CD4-positive, alpha-beta T cell (primary cell): ENCODE measurements at regions of chr4 and their contacts with region 1.

Region 1: GRCh38 chr4:70734168-70734954 is 12.6 kb downstream of the RUFY3 start:
- DNase-seq: peak in 8 of 14 experiments; percentile 4 to 86 (median 34)
- ATAC-seq: peak; percentile 86
- H3K4me3 ChIP-seq: peak overlapping the region; percentile 44
- H3K4me3 Mint-ChIP-seq: peak overlapping the region; percentile 72
- H3K27ac ChIP-seq: peak overlapping the region; percentile 37 to 79
- H3K27ac Mint-ChIP-seq: peak overlapping the region; percentile 80
- H3K4me1 ChIP-seq: peaks cover 35% of the 10 kb centered on the region
- H3K4me1 Mint-ChIP-seq: peaks cover 57% of the 10 kb centered on the region
- H3K27me3 ChIP-seq: no peaks in the 10 kb centered on the region
- H3K27me3 Mint-ChIP-seq: no peaks in the 10 kb centered on the region
- CTCF ChIP-seq: no peak

Region 2: GRCh38 chr4:69934150-69934549 is 800.2 kb before region 1 on chr4:
- CTCF ChIA-PET with region 1: no interaction called
- POLR2A ChIA-PET with region 1: no interaction called
- intact Hi-C with region 1: no loop called
- DNase-seq: no peak
- ATAC-seq: no peak
- H3K4me3 ChIP-seq: no peak overlapping the region
- H3K4me3 Mint-ChIP-seq: no peak overlapping the region
- H3K27ac ChIP-seq: no peak overlapping the region
- H3K27ac Mint-ChIP-seq: no peak overlapping the region
- H3K4me1 ChIP-seq: no peaks in the 10 kb centered on the region
- H3K4me1 Mint-ChIP-seq: no peaks in the 10 kb centered on the region
- H3K27me3 ChIP-seq: no peaks in the 10 kb centered on the region
- H3K27me3 Mint-ChIP-seq: no peaks in the 10 kb centered on the region
- CTCF ChIP-seq: no peak

Region 3: GRCh38 chr4:70687821-70688794 is 46.3 kb before region 1 on chr4 and contains the start of gene UTP3:
- CTCF ChIA-PET with region 1: interaction called, 3 read pairs
- POLR2A ChIA-PET with region 1: interaction called, 49 read pairs
- intact Hi-C with region 1: loop called (anchors 2 to 5 kb)
- DNase-seq: peak; percentile 87 to 98 (median 90)
- ATAC-seq: peak; percentile 87
- H3K4me3 ChIP-seq: peak within 1 kb of the TSS; percentile 74
- H3K4me3 Mint-ChIP-seq: peak within 1 kb of the TSS; percentile 91
- H3K27ac ChIP-seq: peak within 1 kb of the TSS; percentile 94 to 97
- H3K27ac Mint-ChIP-seq: peak within 1 kb of the TSS; percentile 99
- H3K4me1 ChIP-seq: peaks cover 26% of the 10 kb centered on the region
- H3K4me1 Mint-ChIP-seq: peaks cover 45% of the 10 kb centered on the region
- H3K27me3 ChIP-seq: no peaks in the 10 kb centered on the region
- H3K27me3 Mint-ChIP-seq: no peaks in the 10 kb centered on the region
- CTCF ChIP-seq: peak; percentile 98
- total RNA-seq, gene UTP3: 19.2 to 20.5 TPM

Region 4: DNA sequence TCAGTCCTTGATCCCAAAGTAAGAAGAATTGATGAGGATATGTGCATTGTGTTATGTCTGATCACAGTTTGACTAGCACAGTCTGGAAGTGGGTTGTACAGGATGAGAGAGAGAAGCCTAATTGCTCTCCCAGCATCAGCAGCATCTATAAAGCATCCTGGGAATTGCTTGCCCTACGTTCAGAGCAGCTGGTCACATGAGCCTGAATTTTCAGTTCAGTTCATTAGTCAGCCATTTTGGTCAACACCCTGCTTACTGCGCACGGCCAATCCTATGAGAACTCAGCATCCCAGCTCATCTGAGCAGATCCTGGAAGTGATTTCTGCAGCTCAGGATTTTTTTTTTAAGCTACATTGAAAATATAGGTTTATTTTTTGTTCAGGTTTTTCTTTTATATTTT is 12.6 kb before region 1 on chr4 and contains the start of gene RUFY3:
- CTCF ChIA-PET with region 1: interaction called, 4 read pairs
- POLR2A ChIA-PET with region 1: interaction called, 28 read pairs
- intact Hi-C with region 1: no loop called
- DNase-seq: no peak
- ATAC-seq: no peak
- H3K4me3 ChIP-seq: no peak within 1 kb of the TSS
- H3K4me3 Mint-ChIP-seq: peak within 1 kb of the TSS; percentile 26
- H3K27ac ChIP-seq: peak within 1 kb of the TSS in 1 of 2 donors; percentile 26
- H3K27ac Mint-ChIP-seq: peak within 1 kb of the TSS; percentile 27
- H3K4me1 ChIP-seq: peaks cover 11% of the 10 kb centered on the region
- H3K4me1 Mint-ChIP-seq: peaks cover 22% of the 10 kb centered on the region
- H3K27me3 ChIP-seq: no peaks in the 10 kb centered on the region
- H3K27me3 Mint-ChIP-seq: no peaks in the 10 kb centered on the region
- CTCF ChIP-seq: no peak
- total RNA-seq, gene RUFY3: 18.0 to 18.1 TPM

Region 5: DNA sequence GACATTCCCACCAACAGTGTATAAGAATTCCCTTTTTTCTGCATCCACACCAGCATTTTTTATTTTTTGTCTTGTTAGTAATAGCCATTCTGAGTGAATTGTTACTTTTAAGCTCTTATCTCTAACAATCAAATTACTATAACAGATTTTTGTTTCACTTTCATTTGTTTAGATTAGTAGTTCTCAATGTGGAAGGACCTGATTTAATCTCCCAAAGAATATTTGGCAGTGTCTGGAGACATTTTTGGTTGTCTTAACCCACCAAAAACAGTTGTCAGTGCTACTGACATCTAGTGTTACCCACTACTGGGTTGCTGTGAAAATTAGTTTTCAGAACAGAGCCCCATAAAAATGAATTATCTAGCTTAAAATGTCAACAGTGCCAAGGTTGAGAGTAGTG is 25.3 kb after region 1 on chr4:
- CTCF ChIA-PET with region 1: interaction called, 9 read pairs
- POLR2A ChIA-PET with region 1: interaction called, 16 read pairs
- intact Hi-C with region 1: no loop called
- DNase-seq: peak in 1 of 14 experiments; percentile 44
- ATAC-seq: no peak
- H3K4me3 ChIP-seq: no peak overlapping the region
- H3K4me3 Mint-ChIP-seq: peak overlapping the region; percentile 71
- H3K27ac ChIP-seq: no peak overlapping the region
- H3K27ac Mint-ChIP-seq: peak overlapping the region; percentile 56
- H3K4me1 ChIP-seq: no peaks in the 10 kb centered on the region
- H3K4me1 Mint-ChIP-seq: peaks cover 15% of the 10 kb centered on the region
- H3K27me3 ChIP-seq: no peaks in the 10 kb centered on the region
- H3K27me3 Mint-ChIP-seq: no peaks in the 10 kb centered on the region
- CTCF ChIP-seq: no peak

Region 6: DNA sequence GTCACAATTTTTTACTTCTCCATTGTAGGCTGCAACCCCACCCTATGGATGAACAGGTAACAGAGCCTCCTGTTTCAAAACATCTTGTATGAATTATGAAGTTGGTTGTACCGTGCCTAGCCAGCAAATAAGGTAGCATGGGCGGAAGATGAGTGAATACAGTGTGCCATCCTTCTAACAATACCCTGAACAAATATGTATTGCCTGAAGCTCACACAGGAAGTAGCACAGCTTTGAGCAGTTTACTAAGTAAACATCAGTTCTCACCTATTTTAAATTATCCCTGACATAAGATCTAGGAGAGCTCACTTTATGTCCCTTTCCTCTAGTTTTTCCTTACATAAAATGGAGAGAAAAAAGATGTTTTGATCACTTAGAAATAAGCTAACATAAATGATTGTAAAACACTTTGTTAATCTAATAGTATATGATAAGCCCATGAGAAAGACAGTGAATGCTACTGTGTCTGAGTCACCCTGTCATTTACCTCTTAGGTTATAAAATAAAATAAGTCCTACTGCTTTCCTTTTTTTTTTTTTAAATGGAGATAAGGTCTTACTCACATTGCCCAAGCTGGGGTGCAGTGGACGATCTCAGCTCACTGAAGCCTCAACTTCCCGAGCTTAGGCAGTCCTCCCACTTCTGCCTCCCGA is 68.7 kb after region 1 on chr4:
- CTCF ChIA-PET with region 1: interaction called, 3 read pairs
- POLR2A ChIA-PET with region 1: interaction called, 12 read pairs
- intact Hi-C with region 1: no loop called
- DNase-seq: no peak
- ATAC-seq: peak; percentile 44
- H3K4me3 ChIP-seq: no peak overlapping the region
- H3K4me3 Mint-ChIP-seq: no peak overlapping the region
- H3K27ac ChIP-seq: no peak overlapping the region
- H3K27ac Mint-ChIP-seq: peak overlapping the region; percentile 10
- H3K4me1 ChIP-seq: peaks cover 2% of the 10 kb centered on the region
- H3K4me1 Mint-ChIP-seq: peaks cover 22% of the 10 kb centered on the region
- H3K27me3 ChIP-seq: no peaks in the 10 kb centered on the region
- H3K27me3 Mint-ChIP-seq: no peaks in the 10 kb centered on the region
- CTCF ChIP-seq: no peak

Region 7: GRCh38 chr4:70839589-70840093 is 105.3 kb after region 1 on chr4 and contains the start of gene GRSF1:
- CTCF ChIA-PET with region 1: interaction called, 4 read pairs
- POLR2A ChIA-PET with region 1: interaction called, 53 read pairs
- intact Hi-C with region 1: loop called (anchors 2 to 5 kb)
- DNase-seq: peak; percentile 92 to 97 (median 94)
- ATAC-seq: peak; percentile 91
- H3K4me3 ChIP-seq: peak within 1 kb of the TSS; percentile 73
- H3K4me3 Mint-ChIP-seq: peak within 1 kb of the TSS; percentile 100
- H3K27ac ChIP-seq: peak within 1 kb of the TSS; percentile 69 to 73
- H3K27ac Mint-ChIP-seq: peak within 1 kb of the TSS; percentile 93
- H3K4me1 ChIP-seq: peaks cover 35% of the 10 kb centered on the region
- H3K4me1 Mint-ChIP-seq: peaks cover 34% of the 10 kb centered on the region
- H3K27me3 ChIP-seq: no peaks in the 10 kb centered on the region
- H3K27me3 Mint-ChIP-seq: no peaks in the 10 kb centered on the region
- CTCF ChIP-seq: no peak
- total RNA-seq, gene GRSF1: 32.7 to 34.1 TPM

Region 8: GRCh38 chr4:70901984-70902576 is 167.7 kb after region 1 on chr4 and contains the start of gene MOB1B:
- CTCF ChIA-PET with region 1: interaction called, 5 read pairs
- POLR2A ChIA-PET with region 1: interaction called, 9 read pairs
- intact Hi-C with region 1: loop called in 1 of 2 experiments (anchors 2 kb)
- DNase-seq: peak; percentile 69 to 92 (median 82)
- ATAC-seq: peak; percentile 97
- H3K4me3 ChIP-seq: peak within 1 kb of the TSS; percentile 74
- H3K4me3 Mint-ChIP-seq: peak within 1 kb of the TSS; percentile 100
- H3K27ac ChIP-seq: peak within 1 kb of the TSS in 1 of 2 donors; percentile 16
- H3K27ac Mint-ChIP-seq: peak within 1 kb of the TSS; percentile 85
- H3K4me1 ChIP-seq: peaks cover 16% of the 10 kb centered on the region
- H3K4me1 Mint-ChIP-seq: peaks cover 48% of the 10 kb centered on the region
- H3K27me3 ChIP-seq: no peaks in the 10 kb centered on the region
- H3K27me3 Mint-ChIP-seq: no peaks in the 10 kb centered on the region
- CTCF ChIP-seq: peak; percentile 27
- total RNA-seq, gene MOB1B: 13.1 to 13.4 TPM